Brain microvascular endothelial cell (primary cell): ENCODE measurements at regions of chr11 and their contacts with region 1.

Region 1: DNA sequence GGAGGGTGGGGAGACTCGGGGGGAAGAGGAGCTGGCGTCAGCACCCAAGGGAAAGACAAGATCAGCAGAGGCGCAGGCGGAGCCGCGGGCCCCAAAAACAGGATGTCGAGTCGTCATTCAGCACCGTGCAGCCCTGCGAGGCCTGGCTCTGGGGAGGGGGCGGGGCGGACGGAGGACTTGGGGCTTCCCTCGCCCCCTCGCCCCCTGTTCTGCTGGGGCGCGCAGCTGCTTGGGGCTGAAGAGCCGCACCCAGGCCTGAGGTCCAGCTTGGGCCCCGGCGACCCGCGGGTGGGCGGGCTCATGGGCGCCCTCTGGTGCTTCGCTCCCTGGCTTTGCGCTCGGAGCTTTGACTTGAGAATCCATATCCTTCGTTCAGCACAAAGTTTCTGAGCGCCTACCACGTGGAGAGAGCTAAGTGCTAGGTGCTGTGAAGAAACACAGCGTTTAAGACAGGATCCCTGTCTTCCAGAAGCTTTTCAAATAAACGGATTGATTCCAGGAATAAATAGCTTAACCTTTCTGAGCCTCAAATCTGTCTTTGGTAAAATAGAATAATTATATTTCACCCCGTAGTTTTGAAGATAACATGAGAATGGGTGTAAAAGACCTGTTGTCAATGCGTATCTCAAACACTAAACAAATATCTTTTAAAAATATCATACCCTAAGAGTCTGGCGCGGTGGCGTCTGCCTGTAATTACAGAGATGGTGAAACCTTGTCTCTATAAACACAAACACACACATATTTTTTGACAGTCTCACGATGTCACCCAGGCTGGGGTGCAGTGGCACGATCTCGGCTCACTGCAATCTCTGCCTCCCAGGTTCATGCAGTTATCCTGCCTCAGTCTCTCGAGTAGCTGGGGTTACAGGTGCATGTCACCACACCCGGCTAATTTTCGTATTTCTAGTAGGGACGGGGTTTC is 929 bp upstream of the RHOG start:
- DNase-seq: peak; percentile 84
- H3K4me3 ChIP-seq: peak overlapping the region; percentile 73
- H3K27ac ChIP-seq: peak overlapping the region; percentile 84
- H3K27me3 ChIP-seq: no peaks in the 10 kb centered on the region
- CTCF ChIP-seq: peak; percentile 85

Region 2: GRCh38 chr11:3665336-3666022 is 176.2 kb before region 1 on chr11:
- in situ Hi-C with region 1: no loop called
- DNase-seq: no peak
- H3K4me3 ChIP-seq: no peak overlapping the region
- H3K27ac ChIP-seq: no peak overlapping the region
- H3K27me3 ChIP-seq: no peaks in the 10 kb centered on the region
- CTCF ChIP-seq: no peak

Region 3: DNA sequence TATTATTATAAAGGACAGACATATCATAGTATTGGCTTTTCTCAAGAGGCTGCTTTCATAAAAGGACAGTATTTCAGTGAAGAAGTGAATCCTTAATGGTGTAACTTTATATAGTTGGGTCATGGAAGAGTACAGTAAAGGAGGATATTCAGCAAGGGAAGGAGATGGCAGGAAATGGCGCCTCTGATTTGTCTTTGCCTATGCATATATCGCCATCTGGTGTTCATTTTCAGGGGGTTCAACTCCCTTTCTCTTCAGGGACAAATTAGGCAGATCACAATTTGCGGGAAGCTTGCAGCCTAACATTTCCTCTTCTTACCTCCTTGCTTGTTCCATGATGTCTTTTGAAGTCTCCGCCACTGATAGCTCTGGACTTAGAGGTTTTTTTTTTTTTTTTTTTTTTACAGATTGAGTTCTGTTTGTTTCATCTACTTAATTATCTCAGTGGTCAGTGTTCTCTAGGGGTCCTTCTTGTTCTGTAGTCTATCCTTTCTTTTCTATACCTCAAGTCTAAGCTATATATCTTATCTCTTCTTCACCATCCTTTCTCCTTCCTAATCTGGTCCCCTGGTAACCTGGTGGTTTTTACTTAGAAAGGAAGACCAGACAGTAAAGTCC is 231.1 kb after region 1 on chr11:
- in situ Hi-C with region 1: loop called (anchors 25 kb)
- DNase-seq: peak; percentile 57
- H3K4me3 ChIP-seq: no peak overlapping the region
- H3K27ac ChIP-seq: no peak overlapping the region
- H3K27me3 ChIP-seq: no peaks in the 10 kb centered on the region
- CTCF ChIP-seq: peak; percentile 84